ENCODE measurements at regions of chrX and their contacts with region 1.

Region 1: DNA sequence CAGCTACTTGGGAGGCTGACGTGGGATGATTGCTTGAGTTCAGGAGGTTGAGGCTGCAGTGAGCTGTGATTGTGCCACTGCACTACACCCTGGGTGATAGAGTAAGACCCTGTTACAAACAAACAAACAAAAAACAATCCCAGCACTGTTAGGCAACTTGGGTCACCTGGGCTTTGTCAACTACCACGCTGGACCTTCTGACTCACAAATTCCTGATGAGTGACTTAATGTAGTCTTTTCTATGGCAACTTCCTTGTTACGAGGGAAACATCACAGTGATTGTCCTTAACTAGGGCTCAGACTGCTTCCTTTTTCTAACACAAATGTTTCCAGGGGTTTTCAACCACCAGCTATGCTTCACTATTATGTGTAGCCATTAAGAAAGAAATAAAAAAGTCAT is 128.8 kb upstream of the GPC4 start:
- DNase-seq: peak; percentile 68
- H3K4me3 Mint-ChIP-seq: no peak overlapping the region
- H3K27ac Mint-ChIP-seq: peak overlapping the region; percentile 95
- H3K4me1 Mint-ChIP-seq: peaks cover 8% of the 10 kb centered on the region
- H3K27me3 Mint-ChIP-seq: no peaks in the 10 kb centered on the region
- CTCF ChIP-seq: no peak

Region 2: GRCh38 chrX:133580625-133581024 is 36.5 kb after region 1 on chrX:
- CTCF ChIA-PET with region 1: no interaction called
- intact Hi-C with region 1: loop called (anchors 1 kb)
- DNase-seq: no peak
- H3K4me3 Mint-ChIP-seq: no peak overlapping the region
- H3K27ac Mint-ChIP-seq: no peak overlapping the region
- H3K4me1 Mint-ChIP-seq: peaks cover 7% of the 10 kb centered on the region
- H3K27me3 Mint-ChIP-seq: no peaks in the 10 kb centered on the region
- CTCF ChIP-seq: no peak

Region 3: GRCh38 chrX:133590703-133591505 is 46.8 kb after region 1 on chrX:
- CTCF ChIA-PET with region 1: no interaction called
- intact Hi-C with region 1: no loop called
- DNase-seq: no peak
- H3K4me3 Mint-ChIP-seq: no peak overlapping the region
- H3K27ac Mint-ChIP-seq: no peak overlapping the region
- H3K4me1 Mint-ChIP-seq: peaks cover 22% of the 10 kb centered on the region
- H3K27me3 Mint-ChIP-seq: no peaks in the 10 kb centered on the region
- CTCF ChIP-seq: no peak

Region 4: DNA sequence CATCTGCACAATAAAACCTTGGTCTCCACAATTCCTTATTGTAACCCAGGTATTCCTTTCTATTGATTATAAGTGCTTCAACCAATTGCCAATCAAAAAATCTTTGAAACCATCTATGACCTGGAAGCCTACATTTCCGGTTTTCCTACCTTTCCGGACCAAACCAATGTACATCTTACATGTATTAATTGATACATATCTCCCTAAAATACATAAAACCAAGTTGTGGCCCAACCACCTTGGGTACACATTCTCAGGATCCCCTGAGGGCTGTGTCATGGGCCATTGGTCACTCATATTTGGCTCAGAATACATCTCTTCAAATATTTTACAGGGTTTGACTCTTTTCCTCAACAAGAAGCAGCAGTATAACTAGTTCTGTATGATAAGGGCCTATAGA is 76.6 kb after region 1 on chrX:
- CTCF ChIA-PET with region 1: no interaction called
- intact Hi-C with region 1: no loop called
- DNase-seq: no peak
- H3K4me3 Mint-ChIP-seq: no peak overlapping the region
- H3K27ac Mint-ChIP-seq: no peak overlapping the region
- H3K4me1 Mint-ChIP-seq: no peaks in the 10 kb centered on the region
- H3K27me3 Mint-ChIP-seq: no peaks in the 10 kb centered on the region
- CTCF ChIP-seq: no peak

Region 5: DNA sequence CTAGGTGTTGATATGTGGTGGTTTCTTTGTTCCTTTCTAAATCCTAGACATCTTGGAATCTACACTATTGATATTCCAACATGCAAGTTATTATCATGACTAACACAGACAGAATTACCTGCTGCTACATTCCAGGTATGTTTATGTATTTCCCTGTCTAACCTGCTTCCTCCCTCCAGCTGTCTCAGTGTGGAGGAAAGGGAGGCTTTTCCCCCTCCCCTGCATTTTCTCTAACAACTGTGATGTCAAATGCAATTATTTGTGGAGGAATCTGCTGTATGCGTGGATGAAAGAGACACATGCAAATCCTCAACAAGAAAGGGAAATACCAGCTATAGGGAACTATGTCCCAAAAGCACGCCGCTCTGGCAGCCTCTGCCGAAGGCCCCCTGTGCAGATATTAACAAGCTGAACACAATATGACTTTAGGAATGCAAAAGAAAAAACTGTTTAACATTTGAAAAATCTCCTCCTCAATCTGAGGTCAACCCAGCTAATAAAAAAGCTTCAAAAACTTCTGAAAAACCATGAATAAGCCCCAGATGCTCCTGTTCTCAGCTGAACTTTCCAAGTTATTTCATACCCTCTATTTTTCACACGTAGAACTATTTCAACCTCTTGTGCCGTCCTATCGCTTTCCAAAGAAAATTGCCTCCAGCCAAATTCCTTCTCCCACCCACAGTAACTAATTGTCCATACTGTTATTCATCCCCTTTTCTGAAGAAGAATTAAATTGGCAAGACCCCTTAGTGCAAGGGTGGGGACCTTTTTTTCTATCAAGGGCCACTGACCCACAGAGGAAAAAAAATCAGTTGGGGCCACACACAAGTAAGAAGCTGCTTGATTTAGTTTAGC is 96.3 kb after region 1 on chrX:
- CTCF ChIA-PET with region 1: no interaction called
- intact Hi-C with region 1: loop called (anchors 5 kb)
- DNase-seq: peak; percentile 6
- H3K4me3 Mint-ChIP-seq: peak overlapping the region; percentile 14
- H3K27ac Mint-ChIP-seq: peak overlapping the region; percentile 82
- H3K4me1 Mint-ChIP-seq: peaks cover 50% of the 10 kb centered on the region
- H3K27me3 Mint-ChIP-seq: no peaks in the 10 kb centered on the region
- CTCF ChIP-seq: no peak

Region 6: DNA sequence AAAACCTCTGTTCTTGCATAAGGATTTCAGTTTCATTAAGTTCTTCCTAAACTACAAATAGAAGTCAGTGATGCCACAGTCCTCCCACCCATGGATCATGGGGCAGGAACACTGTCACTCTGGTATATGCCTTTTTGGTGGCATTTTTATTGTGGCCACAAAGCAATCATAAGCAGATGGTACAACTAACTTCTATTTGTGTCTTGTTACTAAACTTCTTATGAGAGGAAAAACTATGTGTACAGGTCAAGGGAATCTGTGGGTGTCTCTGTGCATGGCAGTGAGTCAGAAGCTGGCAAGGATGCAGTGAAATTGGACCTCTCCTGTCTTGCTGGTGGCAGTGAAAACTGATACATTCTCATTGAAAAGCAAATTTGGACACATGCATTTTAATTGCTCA is 116.2 kb after region 1 on chrX:
- CTCF ChIA-PET with region 1: no interaction called
- intact Hi-C with region 1: loop called (anchors 2 kb)
- DNase-seq: no peak
- H3K4me3 Mint-ChIP-seq: no peak overlapping the region
- H3K27ac Mint-ChIP-seq: no peak overlapping the region
- H3K4me1 Mint-ChIP-seq: peaks cover 51% of the 10 kb centered on the region
- H3K27me3 Mint-ChIP-seq: no peaks in the 10 kb centered on the region
- CTCF ChIP-seq: no peak

Measured in Calu3 (cell line).